H1 (cell line): ENCODE measurements at regions of chr10 and their contacts with region 1.

Region 1: GRCh38 chr10:82811621-82812020 is 936.6 kb downstream of the NRG3 start:
- DNase-seq: peak; percentile 7 to 82
- H3K4me3 ChIP-seq: no peak overlapping the region
- H3K27ac ChIP-seq: no peak overlapping the region
- H3K4me1 ChIP-seq: no peaks in the 10 kb centered on the region
- H3K27me3 ChIP-seq: no peaks in the 10 kb centered on the region
- CTCF ChIP-seq: peak; percentile 63 to 78 (median 69)
- EP300 ChIP-seq: no peak
- POLR2A ChIP-seq: no peak
- RAD21 ChIP-seq: peak; percentile 57 to 67

Region 2: GRCh38 chr10:82796510-82796909 is 15.1 kb before region 1 on chr10:
- CTCF ChIA-PET with region 1: interaction called, 11 read pairs
- POLR2A ChIA-PET with region 1: no interaction called
- DNase-seq: no peak
- H3K4me3 ChIP-seq: no peak overlapping the region
- H3K27ac ChIP-seq: no peak overlapping the region
- H3K4me1 ChIP-seq: peaks cover 0 to 3% (median 0%) of the 10 kb centered on the region in 4 experiments; a peak in 1 of 7 replicates
- H3K27me3 ChIP-seq: peaks cover 0 to 1% (median 0%) of the 10 kb centered on the region in 4 experiments; a peak in 1 of 7 replicates
- CTCF ChIP-seq: peak in 2 of 3 experiments; percentile 13 to 29; a peak in 2 of 4 replicates
- EP300 ChIP-seq: no peak
- POLR2A ChIP-seq: no peak
- RAD21 ChIP-seq: peak; percentile 52 to 62